Calu3 (cell line): ENCODE measurements at regions of chr3 and their contacts with region 1.

Region 1: GRCh38 chr3:169744366-169745054 is 20.4 kb downstream of the TERC start:
- DNase-seq: no peak
- H3K4me3 Mint-ChIP-seq: no peak overlapping the region
- H3K27ac Mint-ChIP-seq: no peak overlapping the region
- H3K4me1 Mint-ChIP-seq: peaks cover 12% of the 10 kb centered on the region
- H3K27me3 Mint-ChIP-seq: peaks cover 14% of the 10 kb centered on the region
- CTCF ChIP-seq: peak; percentile 42

Region 2: DNA sequence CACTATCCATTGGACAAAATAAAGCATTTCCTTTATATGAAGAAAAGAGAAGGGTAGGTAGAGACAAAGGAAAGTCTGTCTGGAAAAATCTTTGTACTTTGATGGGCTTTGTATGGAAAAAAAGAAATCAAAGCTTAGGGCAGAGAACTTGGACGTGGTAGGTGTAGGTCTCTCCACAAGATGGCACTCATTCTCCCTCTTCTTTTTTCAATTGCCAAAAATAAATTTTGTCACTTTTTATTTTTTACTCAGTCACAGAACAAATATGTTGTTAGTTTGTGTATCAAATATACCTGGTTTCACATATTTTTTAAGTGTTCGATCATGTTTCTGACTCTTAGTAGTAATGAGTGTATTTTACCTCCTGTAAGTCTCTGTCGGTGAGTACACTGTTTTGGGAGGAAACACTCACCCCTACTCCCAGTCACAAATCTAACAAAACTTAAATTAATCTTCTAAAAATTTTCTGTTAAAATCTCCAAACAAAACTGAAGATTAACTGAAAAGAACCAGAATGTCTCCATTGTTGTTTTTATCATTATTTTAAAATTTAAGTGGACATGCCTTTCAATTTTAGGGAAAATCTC is 1233.0 kb before region 1 on chr3:
- CTCF ChIA-PET with region 1: no interaction called
- intact Hi-C with region 1: loop called (anchors 10 kb)
- DNase-seq: peak; percentile 31
- H3K4me3 Mint-ChIP-seq: no peak overlapping the region
- H3K27ac Mint-ChIP-seq: no peak overlapping the region
- H3K4me1 Mint-ChIP-seq: no peaks in the 10 kb centered on the region
- H3K27me3 Mint-ChIP-seq: no peaks in the 10 kb centered on the region
- CTCF ChIP-seq: peak; percentile 75

Region 3: GRCh38 chr3:169041677-169042171 is 702.8 kb before region 1 on chr3:
- CTCF ChIA-PET with region 1: no interaction called
- intact Hi-C with region 1: loop called (anchors 2 kb)
- DNase-seq: no peak
- H3K4me3 Mint-ChIP-seq: no peak overlapping the region
- H3K27ac Mint-ChIP-seq: peak overlapping the region; percentile 28
- H3K4me1 Mint-ChIP-seq: peaks cover 12% of the 10 kb centered on the region
- H3K27me3 Mint-ChIP-seq: no peaks in the 10 kb centered on the region
- CTCF ChIP-seq: peak; percentile 63

Region 4: GRCh38 chr3:169218314-169218983 is 526.1 kb before region 1 on chr3:
- CTCF ChIA-PET with region 1: no interaction called
- intact Hi-C with region 1: loop called (anchors 2 kb)
- DNase-seq: peak; percentile 80
- H3K4me3 Mint-ChIP-seq: no peak overlapping the region
- H3K27ac Mint-ChIP-seq: no peak overlapping the region
- H3K4me1 Mint-ChIP-seq: peaks cover 13% of the 10 kb centered on the region
- H3K27me3 Mint-ChIP-seq: no peaks in the 10 kb centered on the region
- CTCF ChIP-seq: peak; percentile 88

Region 5: GRCh38 chr3:169668957-169669681 is 75.4 kb before region 1 on chr3:
- CTCF ChIA-PET with region 1: interaction called, 10 read pairs
- intact Hi-C with region 1: loop called (anchors 2 kb)
- DNase-seq: peak; percentile 97
- H3K4me3 Mint-ChIP-seq: peak overlapping the region; percentile 79
- H3K27ac Mint-ChIP-seq: peak overlapping the region; percentile 60
- H3K4me1 Mint-ChIP-seq: peaks cover 30% of the 10 kb centered on the region
- H3K27me3 Mint-ChIP-seq: no peaks in the 10 kb centered on the region
- CTCF ChIP-seq: peak; percentile 95

Region 6: DNA sequence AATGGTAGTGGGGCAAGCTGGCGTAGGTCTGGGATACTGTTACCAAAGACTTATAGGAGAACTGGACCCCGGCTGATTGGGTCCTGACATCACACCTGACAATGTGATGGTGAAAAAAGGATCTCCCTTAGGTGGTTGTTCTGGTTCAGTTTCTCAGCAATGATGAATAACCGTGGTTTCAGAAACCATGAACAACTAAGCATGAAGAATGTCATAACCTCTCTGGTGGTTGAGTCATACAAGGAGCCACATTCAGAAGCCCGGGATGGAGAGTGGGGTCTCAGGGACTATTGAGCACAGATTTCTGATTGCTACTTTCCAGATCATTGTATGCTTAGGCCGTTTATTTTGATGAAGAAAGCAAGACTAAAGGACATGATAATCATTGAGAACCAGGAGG is 310.7 kb after region 1 on chr3:
- CTCF ChIA-PET with region 1: no interaction called
- intact Hi-C with region 1: no loop called
- DNase-seq: no peak
- H3K4me3 Mint-ChIP-seq: no peak overlapping the region
- H3K27ac Mint-ChIP-seq: no peak overlapping the region
- H3K4me1 Mint-ChIP-seq: peaks cover 32% of the 10 kb centered on the region
- H3K27me3 Mint-ChIP-seq: no peaks in the 10 kb centered on the region
- CTCF ChIP-seq: no peak